Right cardiac atrium (tissue), 5 donors: ENCODE measurements at regions of chr6 and their contacts with region 1.

Region 1: GRCh38 chr6:3742426-3743344 is 8.8 kb downstream of the PXDC1 start:
- DNase-seq: peak; percentile 80 to 94 (median 92)
- ATAC-seq: peak; percentile 75 to 82
- H3K4me3 ChIP-seq: peak overlapping the region; percentile 11
- H3K27ac ChIP-seq: peak overlapping the region; percentile 75
- H3K4me1 ChIP-seq: peaks cover 5% of the 10 kb centered on the region
- H3K27me3 ChIP-seq: no peaks in the 10 kb centered on the region

Region 2: GRCh38 chr6:3835055-3835731 is 92.5 kb after region 1 on chr6:
- intact Hi-C with region 1: no loop called
- DNase-seq: peak; percentile 71 to 82 (median 73)
- ATAC-seq: peak; percentile 92 to 93
- H3K4me3 ChIP-seq: no peak overlapping the region
- H3K27ac ChIP-seq: peak overlapping the region; percentile 62
- H3K4me1 ChIP-seq: peaks cover 3% of the 10 kb centered on the region
- H3K27me3 ChIP-seq: no peaks in the 10 kb centered on the region

Region 3: DNA sequence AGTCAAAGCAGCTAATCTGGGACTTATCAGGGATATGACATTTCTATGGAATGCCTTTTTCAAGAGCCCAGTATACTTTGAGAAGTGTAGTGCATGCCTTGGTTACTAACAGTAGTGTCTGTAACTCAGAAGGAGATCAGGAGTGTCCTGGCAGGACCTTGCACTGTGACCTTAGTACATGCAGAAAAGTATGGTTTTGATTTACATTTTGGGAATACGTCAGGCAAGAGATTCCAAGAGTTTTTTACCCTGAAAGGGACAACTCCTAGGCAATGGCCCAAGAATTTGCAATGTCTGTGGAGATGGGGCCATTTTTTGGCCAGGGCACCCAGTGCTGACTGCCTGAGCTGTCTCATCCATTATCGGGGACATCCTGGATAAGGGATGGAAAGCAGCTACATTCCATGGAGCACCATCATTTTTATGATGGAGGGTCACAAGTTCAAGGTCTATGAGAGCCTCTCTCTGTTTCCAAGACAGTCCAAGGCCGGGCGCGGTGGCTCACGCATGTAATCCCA is 186.7 kb after region 1 on chr6:
- intact Hi-C with region 1: loop called in 1 of 4 experiments (anchors 2 kb)
- DNase-seq: peak in 1 of 3 donors; percentile 38
- ATAC-seq: peak in 1 of 2 donors; percentile 45
- H3K4me3 ChIP-seq: no peak overlapping the region
- H3K27ac ChIP-seq: no peak overlapping the region
- H3K4me1 ChIP-seq: no peaks in the 10 kb centered on the region
- H3K27me3 ChIP-seq: no peaks in the 10 kb centered on the region

Region 4: GRCh38 chr6:3990692-3991501 is 248.2 kb after region 1 on chr6:
- intact Hi-C with region 1: loop called (anchors 5 to 10 kb)
- DNase-seq: peak; percentile 91 to 94 (median 93)
- ATAC-seq: peak; percentile 92 to 96
- H3K4me3 ChIP-seq: peak overlapping the region; percentile 50
- H3K27ac ChIP-seq: peak overlapping the region; percentile 53
- H3K4me1 ChIP-seq: peaks cover 6% of the 10 kb centered on the region
- H3K27me3 ChIP-seq: no peaks in the 10 kb centered on the region